CD4-positive, alpha-beta T cell (primary cell): ENCODE measurements at regions of chr3 and their contacts with region 1.

Region 1: DNA sequence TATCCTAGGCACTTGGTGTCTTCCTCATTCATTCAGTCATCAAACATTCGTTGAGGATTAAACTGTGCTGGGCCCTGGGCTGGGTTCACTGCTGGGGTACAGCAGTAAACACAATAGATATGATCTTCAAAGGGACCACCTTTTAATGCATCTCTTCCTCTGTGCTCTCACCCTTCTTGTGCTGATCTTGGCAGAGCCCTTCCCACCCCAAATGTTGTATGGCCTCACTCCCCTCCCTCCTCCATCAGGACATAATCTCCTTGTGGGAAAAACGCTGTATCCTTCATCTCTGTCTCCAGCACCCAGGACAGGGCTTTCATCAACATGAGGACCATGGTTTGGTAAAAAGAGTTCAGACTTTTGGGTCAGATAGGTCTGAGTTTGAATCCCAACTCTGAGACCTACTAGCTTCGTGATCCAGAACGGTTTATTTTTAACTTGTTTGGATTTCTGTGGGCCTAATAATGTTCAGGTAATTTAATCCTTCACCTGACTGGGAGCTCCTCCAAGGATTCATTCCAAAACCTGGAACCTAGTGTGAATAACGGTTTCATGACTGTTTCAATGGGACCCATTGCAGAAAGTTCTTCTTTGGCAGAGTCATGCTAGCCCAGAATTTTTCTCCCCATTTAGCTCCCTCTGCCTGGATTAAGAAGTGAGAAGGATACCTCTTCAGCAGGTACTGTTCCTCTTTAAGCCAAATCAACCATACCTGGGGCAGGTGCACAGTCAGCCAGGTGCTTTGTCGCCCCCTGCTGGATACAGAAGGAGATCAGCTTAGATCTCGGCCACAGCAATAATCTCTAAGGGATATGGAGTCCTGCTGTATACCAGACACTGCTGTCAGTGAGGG is 5.2 kb upstream of the WNT7A start:
- DNase-seq: peak; percentile 61 to 88 (median 72)
- ATAC-seq: peak; percentile 79
- H3K4me3 ChIP-seq: no peak overlapping the region
- H3K4me3 Mint-ChIP-seq: peak overlapping the region; percentile 78
- H3K27ac ChIP-seq: no peak overlapping the region
- H3K27ac Mint-ChIP-seq: peak overlapping the region; percentile 3
- H3K4me1 ChIP-seq: peaks cover 27% of the 10 kb centered on the region
- H3K4me1 Mint-ChIP-seq: peaks cover 22% of the 10 kb centered on the region
- H3K27me3 ChIP-seq: peaks cover 4 to 13% of the 10 kb centered on the region in 2 experiments
- H3K27me3 Mint-ChIP-seq: peaks cover 15% of the 10 kb centered on the region
- CTCF ChIP-seq: peak; percentile 95

Region 2: GRCh38 chr3:13073326-13074005 is 811.6 kb before region 1 on chr3 and contains the start of gene IQSEC1:
- CTCF ChIA-PET with region 1: no interaction called
- POLR2A ChIA-PET with region 1: no interaction called
- intact Hi-C with region 1: no loop called
- DNase-seq: peak; percentile 26 to 88 (median 66)
- ATAC-seq: peak; percentile 69
- H3K4me3 ChIP-seq: peak within 1 kb of the TSS; percentile 44
- H3K4me3 Mint-ChIP-seq: peak within 1 kb of the TSS; percentile 83
- H3K27ac ChIP-seq: no peak within 1 kb of the TSS
- H3K27ac Mint-ChIP-seq: no peak within 1 kb of the TSS
- H3K4me1 ChIP-seq: peaks cover 41% of the 10 kb centered on the region
- H3K4me1 Mint-ChIP-seq: peaks cover 35% of the 10 kb centered on the region
- H3K27me3 ChIP-seq: peaks cover 17 to 20% of the 10 kb centered on the region in 2 experiments
- H3K27me3 Mint-ChIP-seq: peaks cover 26% of the 10 kb centered on the region
- CTCF ChIP-seq: no peak
- total RNA-seq, gene IQSEC1: 102 to 108 TPM

Region 3: DNA sequence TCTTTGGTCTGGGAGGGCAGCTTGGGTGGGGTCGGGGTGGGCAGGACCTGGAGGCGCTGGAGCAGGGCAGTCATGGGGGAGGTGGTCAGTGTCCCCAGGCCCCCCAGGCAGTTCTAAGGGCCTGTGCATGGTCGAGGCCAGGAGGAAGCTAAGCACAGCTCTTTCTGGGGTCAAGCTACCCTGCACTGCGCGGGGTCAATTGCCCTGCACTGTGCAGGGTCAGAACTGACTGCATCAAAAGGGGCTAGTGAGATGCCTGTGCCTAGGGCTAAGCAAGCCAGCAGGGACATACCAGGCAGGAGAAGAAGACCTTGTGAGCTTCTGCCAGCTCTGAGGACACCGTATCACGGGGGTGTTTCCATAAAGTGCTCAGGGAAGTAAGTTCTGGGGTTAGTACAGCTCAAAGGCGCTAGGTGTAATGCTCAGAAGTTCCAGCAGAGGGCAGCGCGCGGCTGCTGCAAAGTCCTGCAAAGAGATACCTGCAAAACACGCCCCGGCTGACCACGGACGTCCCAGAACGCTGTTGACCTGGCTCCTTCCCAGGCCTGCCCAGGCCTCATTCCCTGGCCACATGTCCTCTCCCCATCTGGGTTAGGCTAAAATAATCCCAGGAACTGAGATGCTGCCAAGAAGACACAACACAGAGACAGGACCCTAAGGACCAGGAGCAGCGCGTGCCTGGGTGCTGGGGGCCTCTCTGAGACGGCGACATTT is 793.0 kb before region 1 on chr3:
- CTCF ChIA-PET with region 1: no interaction called
- POLR2A ChIA-PET with region 1: no interaction called
- intact Hi-C with region 1: loop called in 1 of 2 experiments (anchors 5 kb)
- DNase-seq: peak; percentile 63 to 88 (median 78)
- ATAC-seq: peak; percentile 93
- H3K4me3 ChIP-seq: no peak overlapping the region
- H3K4me3 Mint-ChIP-seq: no peak overlapping the region
- H3K27ac ChIP-seq: no peak overlapping the region
- H3K27ac Mint-ChIP-seq: no peak overlapping the region
- H3K4me1 ChIP-seq: peaks cover 8% of the 10 kb centered on the region
- H3K4me1 Mint-ChIP-seq: peaks cover 6% of the 10 kb centered on the region
- H3K27me3 ChIP-seq: peaks cover 0 to 3% of the 10 kb centered on the region in 2 experiments
- H3K27me3 Mint-ChIP-seq: peaks cover 18% of the 10 kb centered on the region
- CTCF ChIP-seq: peak; percentile 94

Region 4: DNA sequence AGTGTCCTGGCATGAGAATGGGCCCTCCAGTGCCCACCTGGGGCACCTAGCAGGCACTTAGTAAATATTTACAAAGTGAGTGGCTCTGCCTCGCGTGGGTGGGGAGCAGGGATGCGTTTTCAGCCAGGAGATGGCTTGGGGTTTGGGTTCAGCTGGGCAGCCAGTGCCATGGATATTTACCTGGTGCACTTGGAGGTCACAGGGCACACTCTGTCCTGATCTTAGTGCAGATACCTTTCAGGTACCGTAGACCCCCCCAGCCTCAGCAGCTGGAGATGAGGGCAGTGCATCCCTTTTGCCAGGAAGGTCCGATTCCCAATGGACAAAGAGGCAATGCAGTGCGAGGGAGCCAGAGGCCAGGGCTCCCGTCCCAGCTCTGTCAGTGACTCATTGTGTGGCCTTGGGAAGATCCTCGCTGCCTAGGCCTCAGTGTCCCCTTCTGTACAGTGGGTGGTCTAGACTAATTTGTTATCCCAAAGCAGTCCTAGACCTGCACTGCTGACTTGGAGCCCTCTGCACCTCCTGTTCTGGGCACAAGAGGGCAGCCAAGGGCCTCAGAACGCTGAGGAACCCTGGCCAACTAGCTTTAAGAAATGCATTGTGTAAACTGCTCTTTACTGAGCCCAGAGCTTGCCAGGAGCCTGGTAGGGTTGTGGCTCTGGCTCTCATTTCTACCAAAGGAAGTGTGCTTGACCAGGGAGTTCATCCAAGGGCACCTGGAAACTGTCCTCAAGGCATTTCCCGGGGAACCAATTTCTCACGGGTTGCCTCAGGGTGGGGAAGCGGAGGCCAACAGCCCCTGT is 389.0 kb before region 1 on chr3:
- CTCF ChIA-PET with region 1: interaction called, 7 read pairs
- POLR2A ChIA-PET with region 1: no interaction called
- intact Hi-C with region 1: loop called (anchors 1 to 2 kb)
- DNase-seq: peak; percentile 48 to 81 (median 60)
- ATAC-seq: peak; percentile 100
- H3K4me3 ChIP-seq: no peak overlapping the region
- H3K4me3 Mint-ChIP-seq: no peak overlapping the region
- H3K27ac ChIP-seq: no peak overlapping the region
- H3K27ac Mint-ChIP-seq: no peak overlapping the region
- H3K4me1 ChIP-seq: no peaks in the 10 kb centered on the region
- H3K4me1 Mint-ChIP-seq: no peaks in the 10 kb centered on the region
- H3K27me3 ChIP-seq: no peaks in the 10 kb centered on the region
- H3K27me3 Mint-ChIP-seq: no peaks in the 10 kb centered on the region
- CTCF ChIP-seq: peak; percentile 91

Region 5: DNA sequence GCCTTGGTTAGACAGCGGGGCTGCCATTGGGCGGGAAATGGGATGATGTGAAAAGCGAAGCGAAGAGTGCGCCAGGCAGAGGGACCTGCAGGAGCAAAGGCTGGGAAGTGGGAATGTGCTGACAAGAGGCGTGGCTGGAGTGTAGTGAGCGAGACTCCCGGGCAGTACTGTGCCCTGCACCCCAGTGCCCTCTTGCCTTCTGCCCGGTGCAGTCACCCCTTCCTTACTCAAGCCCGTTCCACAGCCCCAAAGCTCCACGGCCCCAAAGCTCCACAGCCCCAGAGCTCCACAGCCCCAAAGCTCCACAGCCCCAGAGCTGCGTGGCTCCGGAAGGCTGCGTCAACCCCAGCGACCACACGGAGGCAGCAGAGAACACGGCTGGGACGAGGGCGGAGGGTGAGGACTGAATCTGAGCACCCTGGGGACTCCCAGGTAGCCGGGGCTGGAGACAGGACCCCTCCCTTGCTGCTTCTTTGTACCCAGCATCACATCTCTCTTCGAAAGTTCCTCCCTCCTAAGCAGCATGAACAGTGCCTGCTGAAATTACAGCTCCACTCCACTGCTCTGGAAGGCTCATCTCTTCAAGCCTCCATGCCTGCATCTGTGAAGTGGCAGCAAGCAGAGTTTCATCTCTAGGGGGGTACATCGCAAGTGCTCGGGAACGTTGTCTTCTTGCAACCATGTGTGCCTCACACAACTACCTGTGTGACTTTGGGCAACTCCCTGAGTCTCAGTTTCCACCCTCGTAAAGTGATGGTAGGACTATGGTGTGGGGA is 227.2 kb before region 1 on chr3:
- CTCF ChIA-PET with region 1: interaction called, 166 read pairs
- POLR2A ChIA-PET with region 1: interaction called, 37 read pairs
- intact Hi-C with region 1: loop called (anchors 1 kb)
- DNase-seq: peak; percentile 56 to 87 (median 68)
- ATAC-seq: peak; percentile 87
- H3K4me3 ChIP-seq: no peak overlapping the region
- H3K4me3 Mint-ChIP-seq: no peak overlapping the region
- H3K27ac ChIP-seq: no peak overlapping the region
- H3K27ac Mint-ChIP-seq: no peak overlapping the region
- H3K4me1 ChIP-seq: peaks cover 39% of the 10 kb centered on the region
- H3K4me1 Mint-ChIP-seq: peaks cover 28% of the 10 kb centered on the region
- H3K27me3 ChIP-seq: peaks cover 2 to 4% of the 10 kb centered on the region in 2 experiments
- H3K27me3 Mint-ChIP-seq: peaks cover 7% of the 10 kb centered on the region
- CTCF ChIP-seq: peak; percentile 76

Region 6: GRCh38 chr3:13824521-13825310 is 60.4 kb before region 1 on chr3:
- CTCF ChIA-PET with region 1: interaction called, 14 read pairs
- POLR2A ChIA-PET with region 1: no interaction called
- intact Hi-C with region 1: loop called (anchors 5 kb)
- DNase-seq: no peak
- ATAC-seq: no peak
- H3K4me3 ChIP-seq: no peak overlapping the region
- H3K4me3 Mint-ChIP-seq: no peak overlapping the region
- H3K27ac ChIP-seq: no peak overlapping the region
- H3K27ac Mint-ChIP-seq: no peak overlapping the region
- H3K4me1 ChIP-seq: peaks cover 5% of the 10 kb centered on the region
- H3K4me1 Mint-ChIP-seq: peaks cover 22% of the 10 kb centered on the region
- H3K27me3 ChIP-seq: no peaks in the 10 kb centered on the region
- H3K27me3 Mint-ChIP-seq: no peaks in the 10 kb centered on the region
- CTCF ChIP-seq: no peak

Region 7: DNA sequence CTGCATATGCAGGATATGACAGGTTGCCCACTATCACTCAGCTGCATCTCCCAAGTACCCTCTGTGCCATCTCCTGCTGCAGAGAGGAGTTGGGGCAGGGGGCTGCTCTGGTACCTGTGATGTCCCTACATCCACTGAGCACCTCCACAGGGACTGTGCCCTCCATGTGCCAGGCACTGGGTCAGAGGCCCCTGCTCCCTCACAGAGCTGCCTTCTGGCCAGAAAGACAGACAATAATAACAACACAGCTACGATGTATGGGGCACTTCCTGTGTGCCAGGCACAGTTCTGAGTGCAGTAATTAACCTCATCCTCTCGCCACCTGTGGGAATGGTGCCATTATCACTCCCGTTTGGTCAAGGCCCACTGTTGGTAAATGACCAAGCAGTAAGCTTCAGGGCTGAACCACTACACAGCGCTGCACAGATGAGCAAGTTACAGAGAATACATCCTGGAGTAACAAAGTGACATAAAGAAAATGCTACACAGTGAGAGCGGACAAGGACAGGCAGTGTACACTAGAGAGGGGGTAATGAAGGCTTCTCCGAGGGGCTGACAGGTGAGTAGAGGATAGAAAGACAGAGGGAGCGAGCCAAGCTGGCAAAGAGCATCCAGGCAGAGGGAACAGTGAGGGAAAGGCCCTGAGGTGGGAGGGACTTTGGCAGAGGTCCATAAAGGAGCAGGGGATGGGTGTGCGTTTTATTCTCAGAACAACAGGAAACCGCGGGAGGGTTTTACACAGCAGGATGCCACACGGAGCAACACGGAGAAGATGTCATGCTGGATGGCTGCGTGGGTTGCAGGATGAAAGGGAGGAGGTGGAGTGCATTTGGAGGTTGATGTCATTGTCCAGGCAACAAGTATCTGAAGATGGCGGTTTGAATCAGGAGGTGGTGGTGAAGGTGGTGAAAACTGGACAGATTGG is 18.8 kb before region 1 on chr3:
- CTCF ChIA-PET with region 1: interaction called, 24 read pairs
- POLR2A ChIA-PET with region 1: interaction called, 59 read pairs
- intact Hi-C with region 1: loop called in 1 of 2 experiments (anchors 1 kb)
- DNase-seq: peak; percentile 44 to 90 (median 61)
- ATAC-seq: peak; percentile 91
- H3K4me3 ChIP-seq: peak overlapping the region; percentile 36
- H3K4me3 Mint-ChIP-seq: peak overlapping the region; percentile 68
- H3K27ac ChIP-seq: peak overlapping the region; percentile 71 to 90
- H3K27ac Mint-ChIP-seq: peak overlapping the region; percentile 94
- H3K4me1 ChIP-seq: peaks cover 63% of the 10 kb centered on the region
- H3K4me1 Mint-ChIP-seq: peaks cover 63% of the 10 kb centered on the region
- H3K27me3 ChIP-seq: no peaks in the 10 kb centered on the region
- H3K27me3 Mint-ChIP-seq: no peaks in the 10 kb centered on the region
- CTCF ChIP-seq: no peak